H1 (cell line): ENCODE measurements at regions of chr16 and their contacts with region 1.

Region 1: DNA sequence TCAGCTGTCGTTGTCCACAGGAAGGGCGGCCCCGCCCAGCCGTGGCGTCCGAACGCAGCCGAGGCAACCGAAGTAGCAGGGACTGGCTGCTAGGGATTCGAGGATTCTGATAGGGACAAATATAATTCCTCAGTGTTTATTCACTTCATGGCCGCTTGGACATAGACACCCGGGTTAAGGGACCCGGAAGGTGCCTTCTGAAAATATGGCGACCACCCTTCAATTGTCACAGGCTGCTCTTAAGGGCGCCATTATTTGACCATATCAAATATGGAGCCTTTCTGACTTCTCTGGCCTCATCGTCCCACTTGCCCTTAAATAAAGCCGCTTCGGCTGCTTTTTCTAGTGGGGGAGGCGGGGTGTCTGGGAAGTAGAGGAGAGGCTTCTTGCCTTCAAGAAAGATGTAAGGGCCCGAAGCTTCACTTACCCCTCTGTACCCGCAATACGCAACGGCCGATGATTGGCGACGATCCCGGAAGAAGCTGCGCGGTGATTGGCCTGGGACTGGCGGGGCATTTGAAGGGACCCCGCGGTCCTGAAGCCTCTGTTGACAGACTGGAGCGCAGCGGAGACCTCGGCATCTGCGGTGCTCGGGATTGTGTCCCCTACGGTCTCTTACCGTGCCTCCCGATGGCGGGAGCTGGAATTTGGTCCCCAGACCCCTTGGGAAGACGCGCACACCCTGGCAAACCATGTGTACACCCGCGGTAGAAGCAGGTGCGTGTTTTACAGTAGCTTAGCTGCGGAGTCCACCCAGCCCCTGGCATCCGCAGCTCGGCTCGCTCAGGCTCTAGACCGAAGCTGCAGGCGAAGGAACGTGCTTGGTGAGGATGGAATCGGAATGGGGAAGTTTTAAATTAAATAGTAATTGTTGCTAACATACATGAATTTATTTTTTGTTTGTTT is at the start of gene ZNF688:
- DNase-seq: peak; percentile 90 to 91
- H3K4me3 ChIP-seq: peak within 1 kb of the TSS; percentile 78 to 89 (median 82)
- H3K27ac ChIP-seq: peak within 1 kb of the TSS; percentile 64; the same call in 1 of the 2 replicates
- H3K4me1 ChIP-seq: peaks cover 0 to 9% (median 2%) of the 10 kb centered on the region in 4 experiments; a peak in 5 of 7 replicates
- H3K27me3 ChIP-seq: no peaks in the 10 kb centered on the region
- CTCF ChIP-seq: no peak
- EP300 ChIP-seq: no peak
- POLR2A ChIP-seq: peak in 1 of 2 experiments; percentile 42
- RAD21 ChIP-seq: no peak
- total RNA-seq, gene ZNF688: 3.5 and 3.7 TPM in 2 replicates

Region 2: DNA sequence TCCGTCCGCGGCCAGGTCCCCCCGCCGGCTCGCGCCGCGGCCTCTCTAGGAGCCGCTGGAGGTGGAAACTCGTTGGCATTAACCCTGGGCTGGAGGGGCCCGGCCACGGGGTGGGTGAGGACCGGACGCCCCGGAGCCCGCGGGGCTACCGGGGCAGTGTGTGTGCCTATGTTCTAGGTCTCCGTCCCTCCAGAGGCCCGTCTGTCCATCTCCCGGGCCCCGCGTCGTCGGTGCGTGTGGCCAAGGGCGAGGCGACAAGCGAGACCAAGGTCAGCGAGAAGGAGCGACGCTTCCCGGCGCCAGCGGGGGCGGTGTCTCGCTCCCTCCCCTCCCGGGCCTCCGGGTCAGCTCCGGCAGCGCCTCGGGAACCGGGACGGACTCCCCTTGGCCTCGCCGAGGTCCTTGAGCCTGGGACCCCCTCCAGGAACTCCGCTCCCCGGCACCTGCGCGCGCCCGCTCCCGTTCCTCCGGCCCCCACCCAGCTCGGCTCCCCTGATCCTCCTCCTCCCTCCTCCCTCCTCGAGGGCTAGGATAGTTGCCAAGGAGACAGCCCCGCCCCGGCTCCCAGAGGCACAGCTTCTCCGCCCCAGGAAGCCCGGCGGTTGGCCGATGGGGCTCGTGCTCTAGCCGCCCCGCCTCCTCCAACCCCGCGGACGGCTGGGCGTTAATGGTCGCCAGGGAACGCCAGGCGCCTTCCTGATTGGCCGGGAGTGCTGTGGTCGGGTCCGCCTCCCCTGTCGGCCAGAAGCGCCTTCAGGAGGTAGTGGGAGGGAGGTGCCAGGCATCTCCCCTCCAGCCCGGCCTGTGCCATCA is 44.9 kb before region 1 on chr16:
- CTCF ChIA-PET with region 1: interaction called, 3 read pairs
- POLR2A ChIA-PET with region 1: interaction called, 10 read pairs
- DNase-seq: peak; percentile 91 to 97
- H3K4me3 ChIP-seq: peak overlapping the region; percentile 71 to 99 (median 94)
- H3K27ac ChIP-seq: peak overlapping the region; percentile 93
- H3K4me1 ChIP-seq: peaks cover 3 to 6% (median 6%) of the 10 kb centered on the region in 4 experiments; a peak in 6 of 7 replicates
- H3K27me3 ChIP-seq: no peaks in the 10 kb centered on the region
- CTCF ChIP-seq: peak in 2 of 3 experiments; percentile 19 to 25; a peak in 2 of 4 replicates
- EP300 ChIP-seq: no peak
- POLR2A ChIP-seq: peak in 1 of 2 experiments; percentile 81; a peak in 2 of 3 replicates
- RAD21 ChIP-seq: no peak; a peak in 1 of 4 replicates

Region 3: GRCh38 chr16:30541502-30542329 is 30.2 kb before region 1 on chr16:
- CTCF ChIA-PET with region 1: interaction called, 28 read pairs
- POLR2A ChIA-PET with region 1: interaction called, 15 read pairs
- DNase-seq: no peak
- H3K4me3 ChIP-seq: peak overlapping the region in 1 of 4 experiments; percentile 30; a peak in 2 of 8 replicates
- H3K27ac ChIP-seq: 0 out of 2 replicates have a peak overlapping the region, but pooled peaks have one; percentile 31
- H3K4me1 ChIP-seq: peaks cover 5 to 22% (median 19%) of the 10 kb centered on the region in 4 experiments
- H3K27me3 ChIP-seq: no peaks in the 10 kb centered on the region
- CTCF ChIP-seq: no peak
- EP300 ChIP-seq: no peak
- POLR2A ChIP-seq: no peak
- RAD21 ChIP-seq: no peak

Region 4: DNA sequence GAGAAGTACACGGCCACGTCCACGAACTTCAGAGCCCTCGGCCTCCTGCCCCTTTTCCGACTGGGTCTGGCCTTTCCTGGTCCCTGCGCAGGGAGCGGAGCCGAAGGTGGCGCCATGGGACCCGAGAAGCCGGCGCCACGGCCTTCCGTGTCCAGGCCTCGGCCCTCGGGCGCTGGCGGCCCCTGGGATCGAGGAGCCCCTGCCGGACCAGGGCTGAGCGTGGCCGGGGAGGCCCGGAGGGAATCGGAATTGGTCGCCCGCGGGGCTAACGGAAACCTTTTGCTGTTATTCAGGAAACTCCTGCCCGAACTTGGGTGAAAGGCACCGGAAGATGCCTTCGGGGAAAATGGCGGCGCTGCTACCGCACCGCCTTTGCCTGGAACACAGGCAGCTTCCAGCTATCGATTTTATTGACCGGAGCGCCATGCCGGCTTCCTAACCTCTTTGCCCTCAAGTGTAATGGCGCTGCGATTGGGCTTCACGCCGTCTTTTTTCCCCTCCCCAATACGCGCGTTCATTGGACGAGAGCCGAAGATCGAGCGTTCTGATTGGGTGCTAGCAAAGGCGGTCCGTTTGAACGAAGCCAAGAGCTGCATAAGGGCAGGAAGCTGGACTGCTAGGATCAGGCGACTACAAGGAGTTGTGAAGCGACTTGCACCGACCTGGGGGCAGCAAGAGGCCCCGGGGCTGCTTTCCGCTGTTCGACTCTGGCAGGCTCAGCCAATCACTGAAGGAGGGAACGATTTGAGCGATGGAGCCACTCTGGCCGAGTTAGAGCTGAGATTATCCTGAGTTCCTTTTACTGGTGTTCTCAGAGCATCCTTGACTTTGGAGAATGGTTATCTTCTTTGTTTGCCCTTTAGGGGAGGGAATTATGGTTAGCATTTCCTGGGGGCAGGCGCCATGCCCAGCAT is 38.2 kb after region 1 on chr16 and contains the start of gene ZNF689:
- CTCF ChIA-PET with region 1: interaction called, 15 read pairs
- POLR2A ChIA-PET with region 1: interaction called, 27 read pairs
- DNase-seq: peak; percentile 98 to 99
- H3K4me3 ChIP-seq: peak within 1 kb of the TSS; percentile 88 to 98 (median 92)
- H3K27ac ChIP-seq: peak within 1 kb of the TSS; percentile 95
- H3K4me1 ChIP-seq: peaks cover 0 to 3% (median 2%) of the 10 kb centered on the region in 4 experiments; a peak in 3 of 7 replicates
- H3K27me3 ChIP-seq: no peaks in the 10 kb centered on the region
- CTCF ChIP-seq: no peak
- EP300 ChIP-seq: no peak
- POLR2A ChIP-seq: peak; percentile 78 to 86
- RAD21 ChIP-seq: 0 out of 4 replicates have a peak, but pooled peaks of 1 of the 2 experiments have one; percentile 1
- total RNA-seq, gene ZNF689: 14.2 and 14.3 TPM in 2 replicates

Region 5: GRCh38 chr16:30786936-30787612 is 215.1 kb after region 1 on chr16 and contains the start of gene ZNF629:
- CTCF ChIA-PET with region 1: no interaction called
- POLR2A ChIA-PET with region 1: no interaction called
- DNase-seq: peak in 1 of 2 experiments; percentile 87
- H3K4me3 ChIP-seq: peak within 1 kb of the TSS; percentile 70 to 99 (median 93)
- H3K27ac ChIP-seq: peak within 1 kb of the TSS; percentile 79
- H3K4me1 ChIP-seq: peaks cover 0 to 8% (median 0%) of the 10 kb centered on the region in 4 experiments; a peak in 2 of 7 replicates
- H3K27me3 ChIP-seq: no peaks in the 10 kb centered on the region; a peak in 1 of 7 replicates
- CTCF ChIP-seq: peak in 1 of 3 experiments; percentile 17; a peak in 1 of 4 replicates
- EP300 ChIP-seq: 0 out of 3 replicates have a peak, but pooled peaks of 1 of the 2 experiments have one; percentile 11
- POLR2A ChIP-seq: peak in 1 of 2 experiments; percentile 59; a peak in 2 of 3 replicates
- RAD21 ChIP-seq: peak in 1 of 2 experiments; percentile 17; a peak in 1 of 4 replicates
- total RNA-seq, gene ZNF629: 19.3 and 19.5 TPM in 2 replicates